ENCODE measurements at regions of chr14 and their contacts with region 1.

Region 1: DNA sequence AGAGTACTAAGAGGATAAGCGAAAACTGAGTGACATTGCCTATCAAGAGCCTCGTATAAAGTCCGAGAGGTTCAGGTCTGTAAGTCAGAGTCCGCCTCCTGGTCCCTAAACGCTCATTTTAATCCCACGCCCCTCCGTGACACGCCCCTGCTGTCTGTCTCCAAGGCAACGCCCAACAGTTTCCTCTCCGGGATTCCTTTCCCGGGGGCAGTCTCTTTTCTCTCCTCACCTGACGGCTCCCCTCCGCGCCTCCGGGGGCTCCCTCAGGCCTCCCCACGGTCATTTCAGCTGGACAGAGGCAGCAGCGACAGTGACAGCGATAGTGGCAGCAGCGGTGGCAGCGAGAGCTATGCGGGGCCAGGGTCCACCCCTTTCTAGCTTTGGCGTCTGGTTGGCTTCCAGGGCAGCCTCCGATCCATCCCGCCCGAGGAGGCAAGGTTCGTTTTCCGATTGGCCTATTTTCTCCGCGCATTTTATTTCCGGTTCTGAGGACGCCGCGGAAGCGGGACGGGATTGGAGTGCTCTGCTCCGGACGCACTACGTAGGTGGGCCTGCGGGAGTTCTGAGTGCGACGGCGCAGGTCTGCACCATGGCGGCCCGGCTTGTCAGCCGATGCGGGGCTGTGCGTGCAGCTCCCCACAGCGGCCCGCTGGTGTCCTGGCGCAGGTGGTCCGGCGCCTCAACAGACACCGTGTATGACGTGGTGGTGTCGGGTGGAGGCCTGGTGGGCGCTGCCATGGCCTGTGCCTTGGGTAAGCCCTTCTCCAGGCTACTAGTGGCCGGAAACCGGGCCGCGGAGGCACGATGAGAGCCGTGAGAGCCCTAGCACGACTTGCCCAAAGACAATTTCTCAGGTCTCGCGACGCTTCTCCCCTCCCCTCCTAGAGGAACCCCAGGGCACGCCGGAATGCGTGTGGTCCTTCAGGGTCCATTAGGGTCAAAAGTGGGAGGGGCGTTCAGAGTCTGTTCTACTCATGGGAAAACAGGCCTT is at the starts of genes COQ6 and FAM161B:
- DNase-seq: peak; percentile 79 to 98 (median 88)
- ATAC-seq: peak; percentile 92
- H3K4me3 ChIP-seq: peak within 1 kb of the TSS; percentile 96
- H3K4me3 Mint-ChIP-seq: peak within 1 kb of the TSS; percentile 99
- H3K27ac ChIP-seq: peak within 1 kb of the TSS; percentile 94 to 95
- H3K27ac Mint-ChIP-seq: peak within 1 kb of the TSS; percentile 91
- H3K4me1 ChIP-seq: peaks cover 18% of the 10 kb centered on the region
- H3K4me1 Mint-ChIP-seq: peaks cover 32% of the 10 kb centered on the region
- H3K27me3 ChIP-seq: no peaks in the 10 kb centered on the region
- H3K27me3 Mint-ChIP-seq: no peaks in the 10 kb centered on the region
- CTCF ChIP-seq: peak; percentile 27
- total RNA-seq, gene COQ6: 37.1 to 38.9 TPM
- total RNA-seq, gene FAM161B: 1.5 to 1.7 TPM

Region 2: DNA sequence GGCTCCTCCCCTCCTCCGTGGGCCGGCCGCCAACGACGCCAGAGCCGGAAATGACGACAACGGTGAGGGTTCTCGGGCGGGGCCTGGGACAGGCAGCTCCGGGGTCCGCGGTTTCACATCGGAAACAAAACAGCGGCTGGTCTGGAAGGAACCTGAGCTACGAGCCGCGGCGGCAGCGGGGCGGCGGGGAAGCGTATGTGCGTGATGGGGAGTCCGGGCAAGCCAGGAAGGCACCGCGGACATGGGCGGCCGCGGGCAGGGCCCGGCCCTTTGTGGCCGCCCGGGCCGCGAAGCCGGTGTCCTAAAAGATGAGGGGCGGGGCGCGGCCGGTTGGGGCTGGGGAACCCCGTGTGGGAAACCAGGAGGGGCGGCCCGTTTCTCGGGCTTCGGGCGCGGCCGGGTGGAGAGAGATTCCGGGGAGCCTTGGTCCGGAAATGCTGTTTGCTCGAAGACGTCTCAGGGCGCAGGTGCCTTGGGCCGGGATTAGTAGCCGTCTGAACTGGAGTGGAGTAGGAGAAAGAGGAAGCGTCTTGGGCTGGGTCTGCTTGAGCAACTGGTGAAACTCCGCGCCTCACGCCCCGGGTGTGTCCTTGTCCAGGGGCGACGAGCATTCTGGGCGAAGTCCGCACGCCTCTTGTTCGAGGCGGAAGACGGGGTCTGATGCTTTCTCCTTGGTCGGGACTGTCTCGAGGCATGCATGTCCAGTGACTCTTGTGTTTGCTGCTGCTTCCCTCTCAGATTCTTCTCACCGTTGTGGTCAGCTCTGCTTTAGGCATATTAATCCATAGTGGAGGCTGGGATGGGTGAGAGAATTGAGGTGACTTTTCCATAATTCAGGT is 813.4 kb before region 1 on chr14 and contains the start of gene PSEN1:
- CTCF ChIA-PET with region 1: no interaction called
- POLR2A ChIA-PET with region 1: interaction called, 11 read pairs
- intact Hi-C with region 1: no loop called
- DNase-seq: peak; percentile 97 to 99 (median 99)
- ATAC-seq: peak; percentile 93
- H3K4me3 ChIP-seq: peak within 1 kb of the TSS; percentile 98
- H3K4me3 Mint-ChIP-seq: peak within 1 kb of the TSS; percentile 98
- H3K27ac ChIP-seq: peak within 1 kb of the TSS; percentile 92
- H3K27ac Mint-ChIP-seq: peak within 1 kb of the TSS; percentile 99
- H3K4me1 ChIP-seq: peaks cover 23% of the 10 kb centered on the region
- H3K4me1 Mint-ChIP-seq: peaks cover 31% of the 10 kb centered on the region
- H3K27me3 ChIP-seq: no peaks in the 10 kb centered on the region
- H3K27me3 Mint-ChIP-seq: no peaks in the 10 kb centered on the region
- CTCF ChIP-seq: no peak
- total RNA-seq, gene PSEN1: 27.1 to 28.3 TPM

Region 3: GRCh38 chr14:73713803-73714655 is 236.0 kb before region 1 on chr14 and contains the start of gene PNMA1:
- CTCF ChIA-PET with region 1: no interaction called
- POLR2A ChIA-PET with region 1: interaction called, 3 read pairs
- intact Hi-C with region 1: loop called in 1 of 2 experiments (anchors 5 kb)
- DNase-seq: peak; percentile 75 to 95 (median 82)
- ATAC-seq: peak; percentile 68
- H3K4me3 ChIP-seq: peak within 1 kb of the TSS; percentile 87
- H3K4me3 Mint-ChIP-seq: peak within 1 kb of the TSS; percentile 96
- H3K27ac ChIP-seq: peak within 1 kb of the TSS; percentile 73 to 77
- H3K27ac Mint-ChIP-seq: peak within 1 kb of the TSS; percentile 92
- H3K4me1 ChIP-seq: peaks cover 33% of the 10 kb centered on the region
- H3K4me1 Mint-ChIP-seq: peaks cover 33% of the 10 kb centered on the region
- H3K27me3 ChIP-seq: no peaks in the 10 kb centered on the region
- H3K27me3 Mint-ChIP-seq: no peaks in the 10 kb centered on the region
- CTCF ChIP-seq: no peak
- total RNA-seq, gene PNMA1: 52.6 to 55.9 TPM

Region 4: GRCh38 chr14:74018586-74019407 is 68.8 kb after region 1 on chr14 and contains the starts of genes BBOF1 and ENTPD5:
- CTCF ChIA-PET with region 1: interaction called, 3 read pairs
- POLR2A ChIA-PET with region 1: interaction called, 14 read pairs
- intact Hi-C with region 1: loop called in 1 of 2 experiments (anchors 1 kb)
- DNase-seq: peak; percentile 68 to 96 (median 84)
- ATAC-seq: peak; percentile 93
- H3K4me3 ChIP-seq: peak within 1 kb of the TSS; percentile 89
- H3K4me3 Mint-ChIP-seq: peak within 1 kb of the TSS; percentile 98
- H3K27ac ChIP-seq: peak within 1 kb of the TSS; percentile 75 to 87
- H3K27ac Mint-ChIP-seq: peak within 1 kb of the TSS; percentile 95
- H3K4me1 ChIP-seq: peaks cover 16% of the 10 kb centered on the region
- H3K4me1 Mint-ChIP-seq: peaks cover 22% of the 10 kb centered on the region
- H3K27me3 ChIP-seq: no peaks in the 10 kb centered on the region
- H3K27me3 Mint-ChIP-seq: no peaks in the 10 kb centered on the region
- CTCF ChIP-seq: no peak
- total RNA-seq, gene BBOF1: 1.8 to 2.4 TPM
- total RNA-seq, gene ENTPD5: 5.5 to 7.1 TPM

Region 5: DNA sequence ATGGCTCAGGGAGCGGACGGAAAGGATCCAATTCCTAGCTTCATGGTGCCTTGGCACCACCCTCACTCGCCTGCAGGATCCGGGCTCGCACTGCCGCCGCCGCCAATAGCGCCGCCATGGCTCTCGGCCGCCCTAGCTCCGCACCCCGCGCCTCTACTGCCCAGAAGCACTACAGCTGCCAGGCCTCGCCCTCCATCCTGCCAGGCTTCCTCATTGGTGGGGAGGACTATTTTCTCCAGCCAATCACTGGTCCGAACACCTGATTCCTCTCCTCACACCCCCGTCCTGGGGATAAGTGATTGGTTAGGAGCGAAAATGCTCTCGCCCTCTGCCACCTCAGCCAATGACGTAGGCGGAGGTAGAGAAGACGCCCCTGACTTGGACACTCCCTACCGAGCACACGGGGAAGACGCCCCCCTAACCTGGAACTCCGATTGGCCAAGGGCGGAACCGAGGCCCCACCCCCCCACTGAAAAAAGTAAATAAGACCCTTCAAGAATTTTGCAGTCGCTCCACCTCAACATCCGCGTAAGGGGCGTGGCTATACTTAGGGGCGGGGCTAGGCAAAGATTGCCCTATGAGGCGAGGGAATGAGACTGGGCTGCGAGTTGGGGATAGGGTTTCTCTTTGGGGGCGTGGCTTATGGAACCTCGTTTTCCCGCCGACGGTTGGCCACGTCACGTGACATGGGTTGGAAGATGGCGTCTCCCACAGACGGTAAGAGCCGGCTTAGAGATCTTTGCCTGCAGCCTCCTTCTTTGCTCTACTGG is 134.4 kb after region 1 on chr14 and contains the starts of genes ALDH6A1 and LIN52:
- CTCF ChIA-PET with region 1: no interaction called
- POLR2A ChIA-PET with region 1: interaction called, 3 read pairs
- intact Hi-C with region 1: loop called in 1 of 2 experiments (anchors 5 kb)
- DNase-seq: peak; percentile 98 to 100 (median 100)
- ATAC-seq: peak; percentile 86
- H3K4me3 ChIP-seq: peak within 1 kb of the TSS; percentile 95
- H3K4me3 Mint-ChIP-seq: peak within 1 kb of the TSS; percentile 94
- H3K27ac ChIP-seq: peak within 1 kb of the TSS; percentile 52 to 72
- H3K27ac Mint-ChIP-seq: peak within 1 kb of the TSS; percentile 86
- H3K4me1 ChIP-seq: peaks cover 21% of the 10 kb centered on the region
- H3K4me1 Mint-ChIP-seq: peaks cover 36% of the 10 kb centered on the region
- H3K27me3 ChIP-seq: no peaks in the 10 kb centered on the region
- H3K27me3 Mint-ChIP-seq: no peaks in the 10 kb centered on the region
- CTCF ChIP-seq: no peak
- total RNA-seq, gene ALDH6A1: 5.3 to 6.2 TPM
- total RNA-seq, gene LIN52: 5.4 to 6.8 TPM

Region 6: DNA sequence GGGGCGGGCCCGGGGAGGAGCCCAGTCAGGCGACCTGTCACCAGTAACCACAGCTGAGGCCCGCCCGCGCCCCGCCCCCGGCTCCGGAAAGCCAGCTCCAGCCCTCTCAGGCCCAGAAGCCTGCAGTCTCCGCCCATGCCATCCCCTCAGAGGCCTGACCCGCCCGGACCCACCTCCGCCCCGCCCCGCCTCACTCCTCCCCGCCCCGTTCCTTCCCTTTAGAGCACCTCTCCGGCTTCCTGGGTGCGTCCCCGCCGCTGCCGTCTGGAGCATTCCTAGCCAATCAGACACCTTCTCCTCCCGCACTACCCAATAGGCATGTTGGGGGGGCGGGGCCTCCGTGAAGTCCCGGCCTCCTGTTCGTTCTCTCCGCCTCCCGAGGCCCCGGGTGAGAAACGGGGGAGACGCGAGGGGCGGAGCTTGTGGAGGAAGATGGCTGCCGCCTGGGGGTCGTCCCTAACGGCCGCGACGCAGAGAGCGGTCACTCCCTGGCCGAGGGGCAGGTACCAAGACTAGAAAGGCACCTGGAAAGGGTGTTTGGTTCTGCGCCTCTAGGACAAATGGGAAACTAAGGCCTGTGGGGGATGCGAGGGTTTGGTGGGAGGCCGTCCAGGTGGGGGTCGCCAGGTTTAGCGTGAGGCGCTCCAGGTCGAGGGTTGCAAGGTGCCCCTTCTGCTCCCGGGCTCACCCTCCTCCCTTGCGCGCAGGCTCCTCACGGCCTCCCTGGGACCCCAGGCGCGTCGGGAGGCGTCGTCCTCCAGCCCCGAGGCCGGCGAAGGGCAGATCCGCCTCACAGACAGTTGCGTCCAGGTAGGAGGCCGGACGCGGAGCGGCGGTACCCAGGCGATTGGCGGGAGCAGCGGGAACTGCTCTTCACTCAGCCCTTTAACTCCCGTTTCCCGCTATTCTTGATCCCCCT is 543.6 kb after region 1 on chr14 and contains the start of gene ISCA2:
- CTCF ChIA-PET with region 1: no interaction called
- POLR2A ChIA-PET with region 1: no interaction called
- intact Hi-C with region 1: no loop called
- DNase-seq: peak; percentile 97 to 100 (median 99)
- ATAC-seq: peak; percentile 92
- H3K4me3 ChIP-seq: peak within 1 kb of the TSS; percentile 86
- H3K4me3 Mint-ChIP-seq: no peak within 1 kb of the TSS
- H3K27ac ChIP-seq: peak within 1 kb of the TSS; percentile 77 to 80
- H3K27ac Mint-ChIP-seq: no peak within 1 kb of the TSS
- H3K4me1 ChIP-seq: peaks cover 19% of the 10 kb centered on the region
- H3K4me1 Mint-ChIP-seq: peaks cover 35% of the 10 kb centered on the region
- H3K27me3 ChIP-seq: no peaks in the 10 kb centered on the region
- H3K27me3 Mint-ChIP-seq: no peaks in the 10 kb centered on the region
- CTCF ChIP-seq: no peak
- total RNA-seq, gene ISCA2: 22.5 to 23.7 TPM

Measured in CD4-positive, alpha-beta T cell (primary cell).